ENCODE measurements at regions of chr18 and their contacts with region 1.

Region 1: DNA sequence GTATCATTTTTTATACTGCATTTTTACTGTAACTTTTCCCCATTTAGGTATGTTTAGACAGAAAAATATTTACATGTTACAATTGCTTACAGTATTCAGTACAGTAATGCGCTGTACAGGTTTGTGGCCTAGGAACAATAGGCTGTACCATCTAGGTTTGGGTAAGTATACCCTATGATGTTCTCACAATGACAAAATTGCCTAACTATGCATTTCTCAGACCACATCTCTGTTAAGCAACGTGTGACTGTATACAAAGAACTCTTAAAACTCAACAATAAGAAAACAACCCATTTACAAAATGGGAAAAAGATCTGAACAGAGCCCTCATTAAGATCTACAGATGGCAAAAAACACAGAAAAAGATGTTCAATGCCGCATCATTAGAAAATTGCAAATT is 29.4 kb downstream of the FAM210A start:
- DNase-seq: peak; percentile 43
- H3K4me3 ChIP-seq: no peak overlapping the region
- H3K27ac ChIP-seq: no peak overlapping the region
- H3K4me1 ChIP-seq: no peaks in the 10 kb centered on the region
- H3K27me3 ChIP-seq: no peaks in the 10 kb centered on the region
- CTCF ChIP-seq: no peak

Region 2: DNA sequence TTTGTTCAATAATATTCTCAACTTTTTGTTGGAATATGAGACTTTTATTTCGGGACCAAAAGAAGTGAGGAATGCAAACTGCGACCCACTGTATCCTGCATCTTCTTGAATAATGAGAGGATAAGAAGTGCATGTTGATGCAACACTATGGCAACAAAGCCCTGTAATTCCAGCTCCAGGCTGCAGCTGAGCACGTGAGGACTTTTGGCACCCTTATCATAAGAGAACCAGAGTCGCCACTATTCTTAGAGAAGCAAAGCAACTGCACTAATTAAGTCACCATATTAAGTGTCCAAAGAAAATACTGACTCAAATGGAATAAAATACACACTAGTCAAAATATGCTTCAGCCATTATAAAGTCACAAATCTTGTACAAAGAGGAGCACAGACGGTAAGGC is 36.5 kb before region 1 on chr18:
- CTCF ChIA-PET with region 1: no interaction called
- dilution Hi-C with region 1: no loop called
- in situ Hi-C with region 1: no loop called
- intact Hi-C with region 1: no loop called
- DNase-seq: no peak
- H3K4me3 ChIP-seq: no peak overlapping the region
- H3K27ac ChIP-seq: no peak overlapping the region
- H3K4me1 ChIP-seq: no peaks in the 10 kb centered on the region
- H3K27me3 ChIP-seq: no peaks in the 10 kb centered on the region
- CTCF ChIP-seq: no peak

Region 3: DNA sequence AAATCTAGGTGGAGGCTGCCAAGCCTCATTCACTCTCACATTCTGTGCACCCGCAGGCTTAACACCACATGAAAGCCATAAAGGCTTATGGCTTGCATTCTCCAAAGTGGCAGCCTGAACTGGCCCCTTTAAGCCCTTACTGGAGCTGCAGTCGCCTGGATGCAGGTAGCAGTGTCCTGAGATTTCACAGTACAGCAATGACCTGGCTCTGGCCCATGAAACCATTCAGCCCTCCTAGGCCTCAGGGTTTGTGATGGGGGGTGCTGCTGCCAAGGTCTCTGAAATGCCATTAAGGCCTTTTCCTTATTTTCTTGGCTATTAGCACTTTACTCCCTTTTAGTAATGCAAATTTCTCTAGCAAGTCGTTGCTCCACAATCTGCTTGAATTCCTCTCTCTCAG is 78.1 kb after region 1 on chr18:
- CTCF ChIA-PET with region 1: no interaction called
- dilution Hi-C with region 1: no loop called
- in situ Hi-C with region 1: no loop called
- intact Hi-C with region 1: loop called (anchors 2 kb)
- DNase-seq: no peak
- H3K4me3 ChIP-seq: no peak overlapping the region
- H3K27ac ChIP-seq: no peak overlapping the region
- H3K4me1 ChIP-seq: no peaks in the 10 kb centered on the region
- H3K27me3 ChIP-seq: no peaks in the 10 kb centered on the region
- CTCF ChIP-seq: no peak